ENCODE measurements at regions of chr14 and their contacts with region 1.

Region 1: DNA sequence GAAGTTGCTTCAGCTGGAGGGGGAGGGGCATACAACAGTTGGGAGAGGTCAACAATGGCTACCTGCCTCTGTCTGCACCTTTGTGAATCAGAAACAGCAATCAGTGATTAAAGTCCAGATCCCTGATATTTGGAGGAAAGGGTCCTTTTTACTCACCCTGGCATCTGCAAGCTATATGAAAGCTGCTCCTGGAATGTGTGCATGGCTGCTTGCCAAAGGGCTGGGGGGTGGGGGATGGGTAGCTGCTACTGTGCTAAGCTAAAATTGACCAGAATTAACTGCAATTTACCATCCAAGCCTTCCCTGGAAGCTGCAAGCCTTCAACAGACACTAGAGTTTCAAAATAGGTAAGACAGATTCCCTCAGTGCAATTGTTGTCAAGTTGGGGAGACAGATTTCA is 13.5 kb upstream of the GTF2A1 start:
- DNase-seq: no peak
- ATAC-seq: no peak
- H3K4me3 ChIP-seq: no peak overlapping the region
- H3K27ac ChIP-seq: no peak overlapping the region
- H3K4me1 ChIP-seq: no peaks in the 10 kb centered on the region
- H3K27me3 ChIP-seq: no peaks in the 10 kb centered on the region
- CTCF ChIP-seq: no peak
- POLR2A ChIP-seq: no peak

Region 2: GRCh38 chr14:81172316-81172715 is 62.0 kb before region 1 on chr14:
- intact Hi-C with region 1: no loop called
- DNase-seq: no peak
- ATAC-seq: no peak
- H3K4me3 ChIP-seq: no peak overlapping the region
- H3K27ac ChIP-seq: no peak overlapping the region
- H3K4me1 ChIP-seq: peaks cover 0 to 36% (median 8%) of the 10 kb centered on the region in 12 donors
- H3K27me3 ChIP-seq: no peaks in the 10 kb centered on the region
- CTCF ChIP-seq: no peak
- POLR2A ChIP-seq: no peak

Region 3: GRCh38 chr14:81256289-81256960 is 22.1 kb after region 1 on chr14:
- intact Hi-C with region 1: loop called in 1 of 10 experiments (anchors 1 kb)
- DNase-seq: no peak
- ATAC-seq: no peak
- H3K4me3 ChIP-seq: no peak overlapping the region
- H3K27ac ChIP-seq: no peak overlapping the region
- H3K4me1 ChIP-seq: no peaks in the 10 kb centered on the region
- H3K27me3 ChIP-seq: peaks cover 0 to 4% (median 0%) of the 10 kb centered on the region in 9 donors
- CTCF ChIP-seq: no peak
- POLR2A ChIP-seq: no peak

Measured in heart left ventricle (tissue), 16 donors.